Activated CD4-positive, alpha-beta memory T cell treated with anti-CD3 and anti-CD28 coated beads for 36 hours (primary cell): ENCODE measurements at regions of chr6 and their contacts with region 1.

Region 1: DNA sequence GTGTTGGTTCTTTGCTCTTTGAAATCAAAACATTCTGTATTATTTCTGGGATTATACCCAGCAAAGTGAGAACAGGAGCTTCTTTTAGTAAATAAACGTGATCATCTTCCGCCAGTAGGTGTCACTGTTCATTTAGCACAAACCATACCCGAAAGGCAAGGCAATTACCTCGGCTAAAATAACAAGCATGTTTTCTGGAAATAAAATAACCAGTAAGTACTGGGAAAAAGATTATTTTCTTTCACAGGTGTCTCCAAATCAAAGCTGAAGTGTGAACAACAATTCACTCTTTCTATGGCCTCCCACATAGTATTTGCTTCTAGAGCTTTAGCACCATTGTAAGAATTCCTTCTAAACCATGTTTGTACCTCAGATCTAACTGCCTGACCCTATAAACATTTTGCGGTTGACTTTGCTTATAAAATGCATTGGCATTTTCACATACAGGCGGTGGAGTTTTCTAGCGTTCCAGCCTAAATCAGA is 144.6 kb upstream of the AGPAT4 start:
- DNase-seq: no peak
- H3K4me3 Mint-ChIP-seq: no peak overlapping the region
- H3K27ac Mint-ChIP-seq: no peak overlapping the region
- H3K4me1 Mint-ChIP-seq: no peaks in the 10 kb centered on the region
- H3K27me3 Mint-ChIP-seq: peaks cover 6% of the 10 kb centered on the region

Region 2: DNA sequence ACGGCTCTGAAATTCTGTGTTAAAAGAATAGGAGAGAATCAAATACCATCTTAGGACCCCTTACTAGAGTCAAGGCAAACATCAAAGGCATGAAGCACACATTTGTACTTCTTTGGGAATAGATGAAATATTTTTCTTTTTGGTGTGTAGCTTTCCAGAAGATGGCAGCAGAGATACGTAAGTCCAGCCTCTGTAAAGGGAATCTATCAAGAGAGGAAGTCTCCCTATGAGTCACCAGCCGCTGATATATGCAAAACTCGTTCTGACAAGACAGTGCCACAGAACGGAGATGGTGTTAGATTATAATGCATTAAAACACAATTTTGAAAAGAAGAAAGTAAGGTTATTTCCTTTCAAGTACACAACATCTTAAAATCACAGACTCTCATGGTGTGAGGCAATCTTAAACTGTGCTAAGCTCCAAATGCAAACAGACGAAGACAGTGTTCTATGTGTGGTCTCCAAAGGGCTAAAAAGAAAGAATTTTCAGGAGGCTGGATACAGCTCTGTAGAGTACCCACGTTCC is 24.6 kb before region 1 on chr6:
- CTCF ChIA-PET with region 1: interaction called, 27 read pairs
- POLR2A ChIA-PET with region 1: no interaction called
- intact Hi-C with region 1: no loop called
- DNase-seq: peak; percentile 67
- H3K4me3 Mint-ChIP-seq: no peak overlapping the region
- H3K27ac Mint-ChIP-seq: no peak overlapping the region
- H3K4me1 Mint-ChIP-seq: no peaks in the 10 kb centered on the region
- H3K27me3 Mint-ChIP-seq: no peaks in the 10 kb centered on the region

Region 3: GRCh38 chr6:161429921-161430490 is 11.5 kb after region 1 on chr6:
- CTCF ChIA-PET with region 1: interaction called, 22 read pairs
- POLR2A ChIA-PET with region 1: no interaction called
- intact Hi-C with region 1: no loop called
- DNase-seq: no peak
- H3K4me3 Mint-ChIP-seq: no peak overlapping the region
- H3K27ac Mint-ChIP-seq: no peak overlapping the region
- H3K4me1 Mint-ChIP-seq: no peaks in the 10 kb centered on the region
- H3K27me3 Mint-ChIP-seq: peaks cover 4% of the 10 kb centered on the region

Region 4: GRCh38 chr6:161444464-161444863 is 26.0 kb after region 1 on chr6:
- CTCF ChIA-PET with region 1: interaction called, 10 read pairs
- POLR2A ChIA-PET with region 1: no interaction called
- intact Hi-C with region 1: no loop called
- DNase-seq: peak; percentile 41
- H3K4me3 Mint-ChIP-seq: no peak overlapping the region
- H3K27ac Mint-ChIP-seq: no peak overlapping the region
- H3K4me1 Mint-ChIP-seq: no peaks in the 10 kb centered on the region
- H3K27me3 Mint-ChIP-seq: no peaks in the 10 kb centered on the region

Region 5: GRCh38 chr6:161694995-161695394 is 276.5 kb after region 1 on chr6:
- CTCF ChIA-PET with region 1: interaction called, 26 read pairs
- POLR2A ChIA-PET with region 1: no interaction called
- intact Hi-C with region 1: loop called (anchors 1 kb)
- DNase-seq: no peak
- H3K4me3 Mint-ChIP-seq: no peak overlapping the region
- H3K27ac Mint-ChIP-seq: no peak overlapping the region
- H3K4me1 Mint-ChIP-seq: no peaks in the 10 kb centered on the region
- H3K27me3 Mint-ChIP-seq: no peaks in the 10 kb centered on the region